Activated B cell treated with CpG ODN at 0.5 μM for 24 hours (primary cell): ENCODE measurements at regions of chr1 and their contacts with region 1.

Region 1: DNA sequence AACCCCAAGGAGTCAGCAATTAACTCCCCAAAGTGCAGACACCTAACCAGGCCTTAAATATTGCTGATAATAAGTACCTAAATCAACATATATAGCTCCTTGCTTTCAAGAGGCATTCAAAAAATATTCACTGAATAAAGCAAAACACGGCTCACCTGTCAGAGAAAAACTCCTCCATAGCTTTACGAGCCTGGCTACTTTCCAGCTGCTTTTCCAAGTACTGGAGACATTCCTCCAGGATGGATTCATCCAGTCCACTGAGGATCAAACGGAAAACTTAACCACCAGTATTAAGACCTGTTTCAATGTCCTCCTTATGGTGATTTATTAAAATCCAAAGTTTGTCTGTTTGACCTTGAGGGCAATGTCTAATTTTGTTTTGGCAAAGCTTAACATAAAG is 44.6 kb downstream of the UBR4 start:
- DNase-seq: no peak
- ATAC-seq: no peak
- H3K4me3 Mint-ChIP-seq: no peak overlapping the region
- H3K27ac Mint-ChIP-seq: no peak overlapping the region
- H3K4me1 Mint-ChIP-seq: peaks cover 11% of the 10 kb centered on the region
- H3K27me3 Mint-ChIP-seq: no peaks in the 10 kb centered on the region
- CTCF ChIP-seq: no peak

Region 2: DNA sequence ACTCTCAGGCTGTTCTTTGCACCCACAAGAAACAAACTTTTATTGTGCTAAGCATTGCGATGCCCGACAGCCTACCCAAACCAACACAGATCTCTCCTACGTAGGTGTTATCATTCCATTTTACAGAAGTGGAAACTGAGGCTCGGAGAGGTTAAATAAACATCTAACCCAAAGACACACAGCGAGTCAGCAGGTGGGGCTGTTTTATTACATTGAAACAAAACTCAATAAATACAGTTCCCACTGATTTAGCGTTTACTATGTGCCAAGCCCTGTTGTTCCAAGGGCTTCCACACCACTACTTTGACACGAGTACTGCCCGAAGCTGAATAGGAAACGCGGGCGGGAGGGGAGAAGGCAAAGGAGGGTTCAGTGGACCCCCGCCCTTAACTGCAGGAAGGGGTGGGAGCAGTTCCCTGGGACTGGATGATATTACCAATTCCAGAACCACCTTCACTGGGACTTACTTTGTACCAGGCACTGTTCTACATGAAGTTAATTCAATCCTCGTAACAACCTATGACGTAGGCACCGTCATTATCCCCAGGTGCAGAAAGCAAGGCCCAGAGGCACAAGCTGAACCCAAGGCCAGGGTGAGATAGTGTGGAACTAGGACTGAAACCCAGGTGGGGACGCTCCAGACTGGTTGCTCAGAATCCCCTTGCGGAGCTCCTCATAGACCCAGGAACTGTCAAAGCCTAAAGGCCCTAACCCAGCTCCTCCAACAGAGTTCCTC is 243.8 kb before region 1 on chr1:
- CTCF ChIA-PET with region 1: no interaction called
- POLR2A ChIA-PET with region 1: no interaction called
- intact Hi-C with region 1: no loop called
- DNase-seq: no peak
- ATAC-seq: no peak
- H3K4me3 Mint-ChIP-seq: no peak overlapping the region
- H3K27ac Mint-ChIP-seq: no peak overlapping the region
- H3K4me1 Mint-ChIP-seq: peaks cover 33% of the 10 kb centered on the region
- H3K27me3 Mint-ChIP-seq: no peaks in the 10 kb centered on the region
- CTCF ChIP-seq: no peak

Region 3: DNA sequence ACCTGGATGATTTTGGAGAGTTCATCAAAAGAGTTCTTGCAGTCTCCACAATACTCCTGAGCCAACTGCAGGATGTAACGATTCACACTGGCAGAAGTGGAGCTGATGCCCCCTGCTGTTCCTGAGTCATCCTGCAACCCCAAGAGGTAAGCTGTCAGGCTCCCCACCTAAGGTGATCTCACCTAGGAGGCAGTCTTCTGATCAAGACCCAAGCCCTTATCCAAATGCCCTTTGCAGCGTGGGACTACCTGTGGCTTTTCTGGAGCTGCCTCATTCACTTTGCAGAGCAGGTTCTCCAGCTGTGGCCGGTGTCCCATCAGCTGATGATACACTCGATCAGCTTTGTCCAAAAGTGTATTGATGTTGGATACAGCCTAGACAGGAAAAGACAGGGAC is 51.8 kb before region 1 on chr1:
- CTCF ChIA-PET with region 1: no interaction called
- POLR2A ChIA-PET with region 1: interaction called, 11 read pairs
- intact Hi-C with region 1: no loop called
- DNase-seq: no peak
- ATAC-seq: no peak
- H3K4me3 Mint-ChIP-seq: no peak overlapping the region
- H3K27ac Mint-ChIP-seq: no peak overlapping the region
- H3K4me1 Mint-ChIP-seq: no peaks in the 10 kb centered on the region
- H3K27me3 Mint-ChIP-seq: no peaks in the 10 kb centered on the region
- CTCF ChIP-seq: no peak

Region 4: GRCh38 chr1:19189270-19189669 is 23.8 kb after region 1 on chr1:
- CTCF ChIA-PET with region 1: no interaction called
- POLR2A ChIA-PET with region 1: interaction called, 11 read pairs
- intact Hi-C with region 1: no loop called
- DNase-seq: no peak
- ATAC-seq: no peak
- H3K4me3 Mint-ChIP-seq: no peak overlapping the region
- H3K27ac Mint-ChIP-seq: no peak overlapping the region
- H3K4me1 Mint-ChIP-seq: no peaks in the 10 kb centered on the region
- H3K27me3 Mint-ChIP-seq: no peaks in the 10 kb centered on the region
- CTCF ChIP-seq: no peak